Heart left ventricle (tissue), 16 donors: ENCODE measurements at regions of chr10 and their contacts with region 1.

Region 1: GRCh38 chr10:87861953-87862678 is 1.2 kb downstream of the KLLN start:
- DNase-seq: peak; percentile 97 to 98 (median 98)
- ATAC-seq: peak; percentile 88 to 92 (median 91)
- H3K4me3 ChIP-seq: peak overlapping the region; percentile 63 to 95 (median 80)
- H3K27ac ChIP-seq: peak overlapping the region; percentile 95 to 99 (median 97)
- H3K4me1 ChIP-seq: peaks cover 0 to 24% (median 14%) of the 10 kb centered on the region in 12 donors
- H3K27me3 ChIP-seq: no peaks in the 10 kb centered on the region
- CTCF ChIP-seq: no peak
- POLR2A ChIP-seq: peak in 1 of 2 donors; percentile 58

Region 2: GRCh38 chr10:87817609-87818504 is 44.3 kb before region 1 on chr10 and contains the start of gene ATAD1:
- intact Hi-C with region 1: loop called in 1 of 10 experiments (anchors 2 kb)
- DNase-seq: peak; percentile 85 to 91 (median 89)
- ATAC-seq: peak; percentile 95 to 98 (median 98)
- H3K4me3 ChIP-seq: peak within 1 kb of the TSS; percentile 58 to 89 (median 79)
- H3K27ac ChIP-seq: peak within 1 kb of the TSS; percentile 81 to 97 (median 90)
- H3K4me1 ChIP-seq: peaks cover 0 to 42% (median 26%) of the 10 kb centered on the region in 12 donors
- H3K27me3 ChIP-seq: no peaks in the 10 kb centered on the region
- CTCF ChIP-seq: peak in 9 of 12 donors; percentile 11 to 44 (median 32)
- POLR2A ChIP-seq: peak in 1 of 2 donors; percentile 54
- total RNA-seq, gene ATAD1: 64.8 to 115 (median 87.5) TPM

Region 3: DNA sequence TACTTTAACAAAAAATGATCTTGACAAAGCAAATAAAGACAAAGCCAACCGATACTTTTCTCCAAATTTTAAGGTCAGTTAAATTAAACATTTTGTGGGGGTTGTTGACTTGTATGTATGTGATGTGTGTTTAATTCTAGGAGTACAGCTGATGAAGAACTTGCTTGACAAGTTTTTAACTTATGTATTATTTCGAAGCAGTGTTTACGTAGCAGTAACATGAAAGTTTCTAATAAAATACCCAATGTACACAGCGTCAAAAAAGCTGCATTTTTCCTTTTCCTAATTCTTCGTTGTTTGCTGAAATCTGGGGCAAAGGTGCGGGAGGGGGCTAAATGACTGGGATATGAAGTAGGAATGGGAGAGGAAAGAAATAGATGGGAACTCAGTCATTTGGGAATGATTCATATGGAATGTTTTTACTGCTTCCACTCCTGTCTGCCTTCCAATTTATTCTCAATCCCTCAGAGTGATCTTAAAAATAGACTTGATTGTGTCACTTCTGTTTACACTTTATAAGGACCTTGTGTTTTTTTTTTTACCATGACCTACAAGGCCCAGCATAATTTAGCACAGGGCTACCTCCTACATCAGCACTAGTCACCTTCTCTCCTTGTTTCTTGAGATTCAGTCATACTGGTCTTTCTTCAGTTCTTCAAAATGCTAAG is 99.1 kb after region 1 on chr10:
- intact Hi-C with region 1: loop called in 3 of 10 experiments (anchors 5 to 10 kb)
- DNase-seq: no peak
- ATAC-seq: peak; percentile 61 to 84 (median 78)
- H3K4me3 ChIP-seq: no peak overlapping the region
- H3K27ac ChIP-seq: peak overlapping the region in 7 of 12 donors; percentile 0 to 49 (median 43)
- H3K4me1 ChIP-seq: peaks cover 0 to 24% (median 7%) of the 10 kb centered on the region in 12 donors
- H3K27me3 ChIP-seq: no peaks in the 10 kb centered on the region
- CTCF ChIP-seq: no peak
- POLR2A ChIP-seq: no peak

Region 4: GRCh38 chr10:88114368-88114767 is 252.3 kb after region 1 on chr10:
- intact Hi-C with region 1: loop called in 9 of 10 experiments (anchors 2 to 5 kb)
- DNase-seq: peak; percentile 34 to 60 (median 48)
- ATAC-seq: peak; percentile 47 to 90 (median 78)
- H3K4me3 ChIP-seq: no peak overlapping the region
- H3K27ac ChIP-seq: no peak overlapping the region
- H3K4me1 ChIP-seq: peaks cover 0 to 69% (median 3%) of the 10 kb centered on the region in 12 donors
- H3K27me3 ChIP-seq: no peaks in the 10 kb centered on the region
- CTCF ChIP-seq: peak; percentile 48 to 76 (median 66)
- POLR2A ChIP-seq: no peak

Region 5: GRCh38 chr10:88254091-88254490 is 392.0 kb after region 1 on chr10:
- intact Hi-C with region 1: loop called in 4 of 10 experiments (anchors 5 to 10 kb)
- DNase-seq: peak in 1 of 5 donors; percentile 41
- ATAC-seq: peak in 2 of 4 donors; percentile 63 to 67
- H3K4me3 ChIP-seq: no peak overlapping the region
- H3K27ac ChIP-seq: peak overlapping the region in 3 of 12 donors; percentile 23 to 84 (median 73)
- H3K4me1 ChIP-seq: peaks cover 0 to 44% (median 4%) of the 10 kb centered on the region in 12 donors
- H3K27me3 ChIP-seq: no peaks in the 10 kb centered on the region
- CTCF ChIP-seq: no peak
- POLR2A ChIP-seq: no peak

Region 6: DNA sequence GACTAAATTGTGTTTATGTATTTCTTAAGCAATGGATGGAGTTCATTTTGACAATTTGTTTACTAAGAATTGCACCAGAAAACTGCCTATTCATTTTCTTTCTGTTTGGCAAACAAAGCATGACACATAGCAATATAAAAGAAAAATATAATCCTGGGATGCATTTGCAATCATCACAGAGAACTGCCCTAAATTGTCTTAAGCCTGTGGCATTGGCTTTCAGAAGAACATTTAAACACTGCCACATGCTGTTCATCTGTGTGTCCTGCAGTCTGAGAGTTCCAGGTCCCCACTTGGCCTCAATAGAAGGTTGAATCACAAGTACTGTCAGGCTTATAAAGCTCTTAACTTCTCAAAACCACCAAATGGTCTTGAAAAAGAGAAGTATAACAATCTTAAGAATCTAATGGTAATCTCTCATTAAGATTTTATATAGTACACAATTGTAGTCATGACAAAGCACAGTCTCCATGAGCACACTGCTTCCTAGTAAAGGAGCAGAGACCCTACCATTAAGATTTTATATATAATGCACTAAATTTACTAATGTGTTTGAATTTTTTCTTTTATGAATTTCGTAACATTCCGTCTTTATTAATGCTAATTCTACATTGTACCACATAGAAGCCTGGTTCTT is 691.1 kb after region 1 on chr10:
- intact Hi-C with region 1: loop called in 3 of 10 experiments (anchors 2 to 5 kb)
- DNase-seq: peak in 4 of 5 donors; percentile 29 to 47 (median 40)
- ATAC-seq: peak; percentile 88 to 96 (median 90)
- H3K4me3 ChIP-seq: no peak overlapping the region
- H3K27ac ChIP-seq: no peak overlapping the region
- H3K4me1 ChIP-seq: peaks cover 0 to 2% (median 0%) of the 10 kb centered on the region in 12 donors
- H3K27me3 ChIP-seq: no peaks in the 10 kb centered on the region
- CTCF ChIP-seq: peak; percentile 58 to 85 (median 70)
- POLR2A ChIP-seq: no peak